ENCODE measurements at regions of chr9 and their contacts with region 1.

Region 1: GRCh38 chr9:27529316-27530278 is at the start of gene MOB3B:
- DNase-seq: peak; percentile 41 to 72 (median 60)
- H3K4me3 ChIP-seq: peak within 1 kb of the TSS; percentile 54 to 88 (median 68)
- H3K4me3 Mint-ChIP-seq: peak within 1 kb of the TSS; percentile 95
- H3K27ac ChIP-seq: peak within 1 kb of the TSS; percentile 50 to 86
- H3K27ac Mint-ChIP-seq: peak within 1 kb of the TSS; percentile 79 to 95 (median 91)
- H3K4me1 ChIP-seq: peaks cover 19 to 23% of the 10 kb centered on the region in 2 donors
- H3K4me1 Mint-ChIP-seq: peaks cover 25% of the 10 kb centered on the region
- H3K27me3 ChIP-seq: peaks cover 0 to 8% of the 10 kb centered on the region in 2 donors
- H3K27me3 Mint-ChIP-seq: peaks cover 8 to 15% (median 13%) of the 10 kb centered on the region in 3 donors
- CTCF ChIP-seq: peak; percentile 98
- polyA plus RNA-seq, gene MOB3B: 1.2 to 2.2 (median 1.4) TPM

Region 2: GRCh38 chr9:27460226-27461023 is 69.2 kb before region 1 on chr9:
- intact Hi-C with region 1: loop called in 1 of 2 experiments (anchors 10 kb)
- DNase-seq: peak; percentile 80 to 95 (median 91)
- H3K4me3 ChIP-seq: no peak overlapping the region
- H3K4me3 Mint-ChIP-seq: peak overlapping the region in 1 of 2 donors; percentile 6
- H3K27ac ChIP-seq: peak overlapping the region in 1 of 2 donors; percentile 38
- H3K27ac Mint-ChIP-seq: peak overlapping the region; percentile 78 to 93 (median 89)
- H3K4me1 ChIP-seq: peaks cover 19 to 22% of the 10 kb centered on the region in 2 donors
- H3K4me1 Mint-ChIP-seq: peaks cover 24% of the 10 kb centered on the region
- H3K27me3 ChIP-seq: no peaks in the 10 kb centered on the region
- H3K27me3 Mint-ChIP-seq: peaks cover 0 to 2% (median 2%) of the 10 kb centered on the region in 3 donors
- CTCF ChIP-seq: no peak

Region 3: GRCh38 chr9:27491164-27491563 is 38.4 kb before region 1 on chr9:
- intact Hi-C with region 1: loop called in 1 of 2 experiments (anchors 5 kb)
- DNase-seq: peak; percentile 65 to 81 (median 75)
- H3K4me3 ChIP-seq: no peak overlapping the region
- H3K4me3 Mint-ChIP-seq: no peak overlapping the region
- H3K27ac ChIP-seq: peak overlapping the region; percentile 20 to 48
- H3K27ac Mint-ChIP-seq: peak overlapping the region; percentile 0 to 90 (median 60)
- H3K4me1 ChIP-seq: peaks cover 21 to 30% of the 10 kb centered on the region in 2 donors
- H3K4me1 Mint-ChIP-seq: peaks cover 32% of the 10 kb centered on the region
- H3K27me3 ChIP-seq: no peaks in the 10 kb centered on the region
- H3K27me3 Mint-ChIP-seq: no peaks in the 10 kb centered on the region
- CTCF ChIP-seq: no peak